Caco-2 (cell line): ENCODE measurements at regions of chr15 and their contacts with region 1.

Region 1: GRCh38 chr15:52615284-52615683 is 46.5 kb upstream of the ARPP19 start:
- DNase-seq: peak in 1 of 2 experiments; percentile 43
- H3K4me3 ChIP-seq: no peak overlapping the region
- H3K4me3 Mint-ChIP-seq: peak overlapping the region; percentile 42
- H3K27ac Mint-ChIP-seq: peak overlapping the region; percentile 78
- H3K4me1 ChIP-seq: peaks cover 26% of the 10 kb centered on the region
- H3K4me1 Mint-ChIP-seq: peaks cover 16% of the 10 kb centered on the region
- H3K27me3 ChIP-seq: no peaks in the 10 kb centered on the region
- H3K27me3 Mint-ChIP-seq: no peaks in the 10 kb centered on the region
- CTCF ChIP-seq: no peak

Region 2: GRCh38 chr15:52349052-52349700 is 266.1 kb before region 1 on chr15:
- CTCF ChIA-PET with region 1: no interaction called
- POLR2A ChIA-PET with region 1: no interaction called
- intact Hi-C with region 1: no loop called
- DNase-seq: no peak
- H3K4me3 ChIP-seq: no peak overlapping the region
- H3K4me3 Mint-ChIP-seq: no peak overlapping the region
- H3K27ac Mint-ChIP-seq: no peak overlapping the region
- H3K4me1 ChIP-seq: 0 out of 2 replicates have a peak, but pooled peaks cover 6% of the 10 kb centered on the region
- H3K4me1 Mint-ChIP-seq: peaks cover 5% of the 10 kb centered on the region
- H3K27me3 ChIP-seq: no peaks in the 10 kb centered on the region
- H3K27me3 Mint-ChIP-seq: no peaks in the 10 kb centered on the region
- CTCF ChIP-seq: no peak

Region 3: GRCh38 chr15:52568601-52569256 is 46.6 kb before region 1 on chr15 and contains the start of gene ARPP19:
- CTCF ChIA-PET with region 1: no interaction called
- POLR2A ChIA-PET with region 1: no interaction called
- intact Hi-C with region 1: loop called (anchors 1 kb)
- DNase-seq: peak; percentile 95 to 96
- H3K4me3 ChIP-seq: peak within 1 kb of the TSS; percentile 56
- H3K4me3 Mint-ChIP-seq: peak within 1 kb of the TSS; percentile 77
- H3K27ac Mint-ChIP-seq: peak within 1 kb of the TSS; percentile 85
- H3K4me1 ChIP-seq: no peaks in the 10 kb centered on the region; the same call in 1 of the 2 replicates
- H3K4me1 Mint-ChIP-seq: peaks cover 7% of the 10 kb centered on the region
- H3K27me3 ChIP-seq: no peaks in the 10 kb centered on the region
- H3K27me3 Mint-ChIP-seq: no peaks in the 10 kb centered on the region
- CTCF ChIP-seq: no peak
- total RNA-seq, gene ARPP19: 164 and 184 TPM in 2 replicates